Caco-2 (cell line): ENCODE measurements at regions of chr6 and their contacts with region 1.

Region 1: DNA sequence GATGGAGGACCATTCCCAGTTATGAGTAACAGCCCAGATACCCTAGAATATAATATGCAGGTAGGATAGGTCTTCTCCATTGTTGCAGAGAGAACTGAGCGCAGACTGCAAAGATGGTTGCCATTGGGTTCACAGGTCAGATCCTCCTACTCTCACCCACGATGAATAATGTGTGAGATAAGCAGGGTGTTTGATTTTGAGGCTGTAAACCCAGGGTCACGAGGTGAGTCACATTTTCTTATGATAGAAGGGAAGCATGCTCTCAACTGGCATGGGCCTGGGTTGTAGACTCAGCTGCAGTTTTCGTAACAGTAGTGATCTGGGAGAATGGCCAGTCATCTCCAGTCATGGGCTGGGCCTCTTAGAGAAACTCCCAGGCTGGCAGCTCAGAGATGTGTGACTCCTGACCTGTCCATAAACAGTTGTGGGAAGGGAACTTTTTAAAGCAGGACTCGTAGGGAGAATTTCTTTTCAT is 74.2 kb downstream of the CD164 start:
- DNase-seq: peak; percentile 67 to 81
- H3K4me3 ChIP-seq: no peak overlapping the region
- H3K4me3 Mint-ChIP-seq: no peak overlapping the region
- H3K27ac Mint-ChIP-seq: no peak overlapping the region
- H3K4me1 ChIP-seq: peaks cover 17% of the 10 kb centered on the region
- H3K4me1 Mint-ChIP-seq: peaks cover 11% of the 10 kb centered on the region
- H3K27me3 ChIP-seq: no peaks in the 10 kb centered on the region
- H3K27me3 Mint-ChIP-seq: no peaks in the 10 kb centered on the region
- CTCF ChIP-seq: no peak

Region 2: DNA sequence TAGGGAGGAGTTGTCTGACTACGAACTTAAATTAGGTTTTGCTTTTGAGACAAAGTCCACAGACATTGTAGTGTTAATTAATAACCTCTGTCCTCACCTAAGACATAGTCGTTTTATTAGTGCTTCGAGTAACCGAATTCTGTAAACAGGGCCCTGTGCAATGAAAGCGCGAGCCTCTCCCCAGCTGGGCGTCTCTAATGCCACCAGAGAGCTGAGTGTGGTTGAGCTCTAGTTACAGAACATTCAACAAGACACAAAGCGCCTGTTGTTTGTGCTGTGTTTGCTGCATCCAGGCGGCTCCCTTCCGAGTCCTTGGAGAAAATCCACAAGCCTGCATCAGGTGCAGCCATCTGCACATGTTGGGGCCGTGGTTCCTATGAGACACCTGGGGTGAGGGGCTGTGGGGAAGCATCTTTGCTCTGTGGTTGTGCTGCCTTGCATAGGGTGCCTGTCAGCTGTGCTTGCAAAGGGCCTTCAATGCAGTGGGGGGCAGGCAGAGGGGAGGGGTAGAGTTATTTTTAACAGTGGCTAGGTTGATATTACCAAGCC is 10.3 kb after region 1 on chr6:
- CTCF ChIA-PET with region 1: no interaction called
- POLR2A ChIA-PET with region 1: no interaction called
- intact Hi-C with region 1: loop called (anchors 1 kb)
- DNase-seq: peak in 1 of 2 experiments; percentile 50
- H3K4me3 ChIP-seq: no peak overlapping the region
- H3K4me3 Mint-ChIP-seq: no peak overlapping the region
- H3K27ac Mint-ChIP-seq: no peak overlapping the region
- H3K4me1 ChIP-seq: peaks cover 24% of the 10 kb centered on the region
- H3K4me1 Mint-ChIP-seq: peaks cover 19% of the 10 kb centered on the region
- H3K27me3 ChIP-seq: no peaks in the 10 kb centered on the region
- H3K27me3 Mint-ChIP-seq: no peaks in the 10 kb centered on the region
- CTCF ChIP-seq: no peak